Common myeloid progenitor, CD34-positive (primary cell): ENCODE measurements at regions of chr11 and their contacts with region 1.

Region 1: DNA sequence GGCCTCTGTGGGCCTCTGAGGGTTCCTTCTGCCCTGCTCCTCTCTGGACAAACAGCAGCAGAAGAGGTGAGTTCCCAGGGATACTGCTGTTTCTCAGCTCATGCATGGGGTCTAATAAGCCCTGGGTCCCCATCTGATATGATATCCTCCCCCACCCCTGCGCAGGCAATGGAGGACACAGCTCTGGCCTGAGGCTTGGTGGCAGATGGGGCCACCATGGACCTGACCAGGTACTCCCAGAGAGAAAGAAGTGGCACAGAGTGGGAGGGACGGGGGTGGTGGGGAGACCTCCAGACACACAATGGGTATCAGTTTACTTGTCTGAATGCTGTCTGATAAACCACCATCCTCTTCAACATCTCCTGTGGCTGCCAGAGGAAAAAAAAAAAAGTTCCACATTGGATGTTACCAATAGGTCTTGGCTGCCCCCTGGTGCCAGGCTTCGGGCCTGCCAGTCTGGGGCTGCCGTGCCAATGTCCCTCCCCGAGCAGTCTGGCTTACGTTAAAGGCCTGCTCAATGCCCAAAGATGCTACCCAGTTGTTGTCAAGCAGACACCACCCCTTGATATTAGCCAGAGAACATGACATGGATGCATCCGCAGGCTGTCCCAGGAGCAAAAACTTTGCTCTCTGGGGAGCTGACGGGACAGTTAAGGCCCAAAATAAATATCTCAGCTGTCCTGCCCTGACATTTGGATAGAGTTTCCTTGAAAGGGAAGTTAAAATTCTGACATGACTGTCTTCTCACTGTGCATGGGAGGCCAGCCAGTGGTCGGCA is 27.9 kb upstream of the ABCC8 start:
- DNase-seq: peak; percentile 67 to 85 (median 79)
- H3K4me3 ChIP-seq: no peak overlapping the region
- H3K27ac ChIP-seq: no peak overlapping the region
- H3K4me1 ChIP-seq: no peaks in the 10 kb centered on the region
- H3K27me3 ChIP-seq: peaks cover 0 to 3% (median 2%) of the 10 kb centered on the region in 5 experiments

Region 2: GRCh38 chr11:17389211-17389956 is 115.1 kb before region 1 on chr11:
- CTCF ChIA-PET with region 1: interaction called, 220 read pairs
- POLR2A ChIA-PET with region 1: no interaction called
- DNase-seq: peak; percentile 69 to 82 (median 80)
- H3K4me3 ChIP-seq: peak overlapping the region in 6 of 7 experiments; percentile 22 to 76 (median 60)
- H3K27ac ChIP-seq: no peak overlapping the region
- H3K4me1 ChIP-seq: peaks cover 0 to 12% (median 7%) of the 10 kb centered on the region in 4 experiments
- H3K27me3 ChIP-seq: peaks cover 0 to 7% (median 0%) of the 10 kb centered on the region in 5 experiments

Region 3: GRCh38 chr11:17519061-17519885 is 14.8 kb after region 1 on chr11:
- CTCF ChIA-PET with region 1: interaction called, 62 read pairs
- POLR2A ChIA-PET with region 1: no interaction called
- DNase-seq: no peak
- H3K4me3 ChIP-seq: no peak overlapping the region
- H3K27ac ChIP-seq: no peak overlapping the region
- H3K4me1 ChIP-seq: no peaks in the 10 kb centered on the region
- H3K27me3 ChIP-seq: peaks cover 0 to 7% (median 3%) of the 10 kb centered on the region in 5 experiments

Region 4: DNA sequence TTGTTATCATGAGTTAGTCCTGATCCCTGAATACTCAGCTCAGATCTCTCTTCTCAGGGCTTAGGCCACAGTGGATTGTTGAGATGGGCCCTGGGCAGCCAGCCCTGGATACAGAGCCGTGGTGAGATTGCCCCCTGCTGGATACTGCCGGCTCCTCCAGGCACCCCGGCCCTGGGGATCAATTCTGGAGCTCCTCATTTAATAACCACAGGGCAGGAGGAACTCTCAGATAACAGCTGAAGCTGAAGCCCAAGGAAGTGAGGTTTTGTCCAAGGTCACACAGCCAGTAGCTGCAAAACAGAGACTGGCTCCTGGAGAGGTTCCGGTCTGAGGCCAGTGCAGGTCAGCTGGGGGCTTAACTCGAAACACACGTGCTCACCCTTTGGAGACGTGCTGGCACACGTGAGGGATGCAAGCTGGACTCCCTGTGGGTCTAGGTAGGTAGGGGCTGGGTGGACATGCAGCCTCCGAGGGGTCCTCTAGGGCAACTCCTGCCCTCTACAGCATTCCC is 23.7 kb after region 1 on chr11:
- CTCF ChIA-PET with region 1: interaction called, 11 read pairs
- POLR2A ChIA-PET with region 1: no interaction called
- DNase-seq: peak; percentile 30 to 56 (median 52)
- H3K4me3 ChIP-seq: no peak overlapping the region
- H3K27ac ChIP-seq: no peak overlapping the region
- H3K4me1 ChIP-seq: no peaks in the 10 kb centered on the region
- H3K27me3 ChIP-seq: peaks cover 0 to 10% (median 2%) of the 10 kb centered on the region in 5 experiments